Activated T-helper 1 cell treated with anti-CD3 and anti-CD28 coated beads, Interleukin-12 subunit alpha, Interleukin-12 subunit beta, Interleukin-2, Interleukin-4 antibody, amounts not matched to agents 30 ng/mL and 10 ng/mL and 1 ng/mL, durations not matched to agents 14 hours and 24 hours and 36 hours (primary cell): ENCODE measurements at regions of chr15 and their contacts with region 1.

Region 1: DNA sequence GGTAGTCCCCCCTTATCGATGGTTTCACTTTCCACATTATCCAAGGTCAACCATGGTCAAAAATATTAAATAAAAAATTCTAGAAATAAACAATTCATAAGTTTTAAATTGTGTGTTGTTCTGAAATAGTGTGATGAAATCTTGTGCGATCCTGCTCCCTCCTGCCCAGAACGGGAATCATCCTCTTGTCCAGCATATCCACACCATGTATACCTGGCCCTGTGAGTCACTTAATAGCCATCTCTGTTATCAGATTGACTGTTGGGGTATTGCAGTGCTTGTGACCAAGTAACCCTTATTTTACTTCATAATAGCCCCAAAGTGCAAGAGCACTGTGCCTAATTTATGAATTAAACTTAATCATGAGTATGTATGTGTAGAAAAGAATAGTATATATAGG is 19.1 kb downstream of the FAM81A start:
- DNase-seq: no peak
- H3K4me3 Mint-ChIP-seq: no peak overlapping the region
- H3K27ac Mint-ChIP-seq: no peak overlapping the region
- H3K4me1 Mint-ChIP-seq: no peaks in the 10 kb centered on the region
- H3K27me3 Mint-ChIP-seq: peaks cover 25% of the 10 kb centered on the region

Region 2: DNA sequence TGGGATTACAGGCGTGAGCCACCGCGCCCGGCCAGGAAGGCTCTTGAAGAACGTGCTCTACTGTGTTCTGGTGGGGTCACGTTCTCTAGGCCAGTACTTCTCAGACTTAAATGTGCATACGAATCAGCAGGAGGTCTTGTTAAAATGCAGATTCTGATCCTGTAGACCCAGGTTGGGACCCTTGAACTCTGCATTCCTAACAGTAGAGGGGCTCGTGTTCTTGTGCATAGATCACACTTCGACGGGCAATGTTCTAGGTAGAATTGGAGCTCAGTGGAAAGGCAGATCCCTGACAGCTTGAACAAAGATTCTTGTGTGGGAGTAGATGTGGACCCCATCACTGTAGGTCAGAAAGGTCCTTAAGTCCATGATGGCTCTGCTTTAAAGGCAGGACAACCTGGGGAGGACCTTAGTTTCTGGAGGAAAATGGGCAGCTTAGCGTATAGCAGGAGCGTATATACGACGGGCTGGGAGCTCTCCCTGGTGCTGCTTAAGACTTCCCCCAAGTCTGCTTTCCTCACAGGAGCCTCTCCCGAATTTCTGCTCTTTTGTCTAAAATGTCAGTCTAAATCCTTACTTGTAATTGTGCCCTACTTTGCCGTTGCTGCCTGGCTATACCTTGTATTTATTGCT is 36.0 kb before region 1 on chr15:
- intact Hi-C with region 1: loop called (anchors 1 kb)
- DNase-seq: no peak
- H3K4me3 Mint-ChIP-seq: no peak overlapping the region
- H3K27ac Mint-ChIP-seq: no peak overlapping the region
- H3K4me1 Mint-ChIP-seq: peaks cover 22% of the 10 kb centered on the region
- H3K27me3 Mint-ChIP-seq: peaks cover 48% of the 10 kb centered on the region